ENCODE measurements at regions of chr21 and their contacts with region 1.

Region 1: DNA sequence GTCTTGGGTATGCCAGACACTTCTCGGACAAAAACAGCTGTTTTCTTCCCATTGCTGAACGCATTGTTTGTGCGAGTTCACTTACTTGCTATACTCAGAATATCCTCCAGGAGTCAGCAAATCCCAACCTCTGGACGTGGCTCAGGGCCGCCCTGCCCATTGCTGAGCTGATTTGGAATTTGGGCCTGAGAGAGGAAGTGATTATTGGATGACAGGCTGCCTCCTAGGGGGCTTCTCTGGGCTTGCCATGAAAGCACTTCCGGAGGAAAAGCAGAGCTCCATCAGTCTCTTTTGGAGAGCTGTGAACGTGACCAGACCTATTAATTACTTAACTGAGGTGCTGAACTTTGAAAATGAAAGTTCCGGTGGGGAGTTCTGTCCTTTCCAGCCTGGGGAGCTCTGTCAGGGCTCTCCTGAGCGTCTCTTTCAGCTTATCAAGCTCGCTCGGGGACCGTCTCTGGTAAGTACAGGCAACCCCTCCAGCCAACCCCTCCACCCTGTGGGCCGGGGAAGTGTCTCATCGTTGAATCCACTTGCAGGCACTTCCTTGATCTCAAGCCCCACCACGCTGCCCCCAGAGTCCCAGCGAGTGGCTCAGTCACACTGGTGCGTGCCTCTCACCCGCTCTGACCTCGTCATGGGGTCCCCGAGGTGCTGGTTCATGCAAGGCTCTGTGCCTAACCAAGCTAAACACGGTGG is 76.9 kb downstream of the CLIC6 start:
- DNase-seq: peak; percentile 63
- H3K4me3 ChIP-seq: no peak overlapping the region
- H3K27ac ChIP-seq: no peak overlapping the region
- H3K4me1 ChIP-seq: peaks cover 31% of the 10 kb centered on the region
- H3K27me3 ChIP-seq: no peaks in the 10 kb centered on the region
- CTCF ChIP-seq: peak; percentile 84 to 96

Region 2: GRCh38 chr21:34693192-34693810 is 52.4 kb before region 1 on chr21:
- CTCF ChIA-PET with region 1: interaction called, 6 read pairs
- dilution Hi-C with region 1: no loop called
- in situ Hi-C with region 1: no loop called
- intact Hi-C with region 1: loop called (anchors 1 kb)
- DNase-seq: peak; percentile 39
- H3K4me3 ChIP-seq: no peak overlapping the region
- H3K27ac ChIP-seq: no peak overlapping the region
- H3K4me1 ChIP-seq: peaks cover 6% of the 10 kb centered on the region
- H3K27me3 ChIP-seq: no peaks in the 10 kb centered on the region
- CTCF ChIP-seq: peak; percentile 83 to 92

Region 3: DNA sequence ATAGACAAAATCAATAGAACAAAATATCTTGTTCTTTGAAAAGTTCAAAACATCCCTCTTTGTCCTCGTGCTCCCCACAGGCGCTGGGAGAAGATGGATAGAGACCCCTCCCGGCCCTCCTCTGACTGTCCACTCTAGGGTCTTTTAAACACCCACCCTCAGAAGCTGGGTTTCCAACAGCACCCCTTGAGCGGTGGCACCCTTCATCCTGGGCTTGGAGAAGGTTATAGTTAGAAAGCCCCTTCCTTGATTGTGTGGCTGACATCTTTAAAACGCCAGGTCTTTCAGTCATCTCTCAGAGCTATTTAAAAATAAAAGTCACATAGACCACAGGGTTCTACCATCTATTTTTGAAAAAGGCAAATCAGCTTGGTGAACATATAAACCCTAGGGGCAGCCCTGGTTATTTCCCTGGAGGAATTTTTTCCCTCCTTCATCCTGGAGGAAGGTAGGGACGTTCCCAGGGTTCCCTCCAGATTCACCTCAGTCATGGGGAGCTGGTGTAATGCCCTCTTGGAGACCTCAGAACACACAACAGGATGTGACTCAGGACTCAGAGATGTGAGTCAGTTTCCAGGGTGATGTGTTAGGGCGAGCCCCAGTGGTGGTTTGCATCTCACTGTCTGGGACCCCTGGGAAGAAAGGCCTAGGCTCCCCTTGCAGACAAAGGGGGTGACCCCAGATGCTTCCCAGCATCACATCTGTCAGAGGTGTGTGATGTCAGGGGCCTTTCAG is 61.6 kb after region 1 on chr21:
- CTCF ChIA-PET with region 1: interaction called, 4 read pairs
- dilution Hi-C with region 1: no loop called
- in situ Hi-C with region 1: no loop called
- intact Hi-C with region 1: loop called (anchors 2 kb)
- DNase-seq: peak; percentile 97
- H3K4me3 ChIP-seq: no peak overlapping the region
- H3K27ac ChIP-seq: peak overlapping the region; percentile 100
- H3K4me1 ChIP-seq: peaks cover 78% of the 10 kb centered on the region
- H3K27me3 ChIP-seq: no peaks in the 10 kb centered on the region
- CTCF ChIP-seq: peak in 1 of 2 donors; percentile 21

Region 4: DNA sequence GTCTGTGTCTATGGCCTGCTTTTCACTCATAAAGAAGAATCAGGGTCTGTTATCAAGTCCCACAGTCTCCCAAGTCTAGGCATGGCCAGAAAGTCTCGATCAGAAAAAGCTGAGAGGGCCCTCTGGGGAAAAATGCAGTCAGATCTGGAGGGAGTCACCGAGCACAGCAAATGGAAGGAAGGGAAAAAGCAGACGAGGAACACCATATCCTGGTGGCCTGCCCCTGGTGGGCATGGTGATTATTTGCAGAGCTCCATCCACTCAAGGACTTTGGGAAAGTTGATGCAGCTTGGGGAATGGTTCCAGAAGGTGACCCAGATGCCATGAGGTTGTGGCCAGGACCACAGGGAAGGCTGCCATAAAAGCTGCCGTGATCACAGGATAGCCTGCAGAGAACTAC is 112.2 kb after region 1 on chr21:
- CTCF ChIA-PET with region 1: no interaction called
- dilution Hi-C with region 1: no loop called
- in situ Hi-C with region 1: loop called in 1 of 2 experiments (anchors 10 kb)
- intact Hi-C with region 1: no loop called
- DNase-seq: no peak
- H3K4me3 ChIP-seq: no peak overlapping the region
- H3K27ac ChIP-seq: no peak overlapping the region
- H3K4me1 ChIP-seq: no peaks in the 10 kb centered on the region
- H3K27me3 ChIP-seq: no peaks in the 10 kb centered on the region
- CTCF ChIP-seq: no peak

Region 5: GRCh38 chr21:35508139-35508888 is 762.6 kb after region 1 on chr21:
- CTCF ChIA-PET with region 1: no interaction called
- dilution Hi-C with region 1: no loop called
- in situ Hi-C with region 1: no loop called
- intact Hi-C with region 1: loop called (anchors 1 kb)
- DNase-seq: peak; percentile 56
- H3K4me3 ChIP-seq: no peak overlapping the region
- H3K27ac ChIP-seq: no peak overlapping the region
- H3K4me1 ChIP-seq: peaks cover 22% of the 10 kb centered on the region
- H3K27me3 ChIP-seq: no peaks in the 10 kb centered on the region
- CTCF ChIP-seq: peak in 1 of 2 donors; percentile 6

Region 6: GRCh38 chr21:35940074-35940927 is 1194.6 kb after region 1 on chr21:
- CTCF ChIA-PET with region 1: no interaction called
- dilution Hi-C with region 1: no loop called
- in situ Hi-C with region 1: no loop called
- intact Hi-C with region 1: loop called (anchors 1 kb)
- DNase-seq: peak; percentile 66
- H3K4me3 ChIP-seq: no peak overlapping the region
- H3K27ac ChIP-seq: no peak overlapping the region
- H3K4me1 ChIP-seq: no peaks in the 10 kb centered on the region
- H3K27me3 ChIP-seq: no peaks in the 10 kb centered on the region
- CTCF ChIP-seq: peak; percentile 77

Measured in mammary epithelial cell (primary cell).